HepG2 (cell line): ENCODE measurements at regions of chr13 and their contacts with region 1.

Region 1: GRCh38 chr13:106561551-106562170 is 6.3 kb downstream of the ARGLU1 start:
- DNase-seq: no peak
- ATAC-seq: peak; percentile 45; the same call in 2 of the 3 replicates
- H3K4me3 ChIP-seq: no peak overlapping the region
- H3K27ac ChIP-seq: no peak overlapping the region
- H3K4me1 ChIP-seq: peaks cover 39% of the 10 kb centered on the region
- H3K27me3 ChIP-seq: no peaks in the 10 kb centered on the region; a peak in 1 of 5 replicates
- CTCF ChIP-seq: no peak
- EP300 ChIP-seq: no peak
- POLR2A ChIP-seq: no peak
- RAD21 ChIP-seq: no peak

Region 2: DNA sequence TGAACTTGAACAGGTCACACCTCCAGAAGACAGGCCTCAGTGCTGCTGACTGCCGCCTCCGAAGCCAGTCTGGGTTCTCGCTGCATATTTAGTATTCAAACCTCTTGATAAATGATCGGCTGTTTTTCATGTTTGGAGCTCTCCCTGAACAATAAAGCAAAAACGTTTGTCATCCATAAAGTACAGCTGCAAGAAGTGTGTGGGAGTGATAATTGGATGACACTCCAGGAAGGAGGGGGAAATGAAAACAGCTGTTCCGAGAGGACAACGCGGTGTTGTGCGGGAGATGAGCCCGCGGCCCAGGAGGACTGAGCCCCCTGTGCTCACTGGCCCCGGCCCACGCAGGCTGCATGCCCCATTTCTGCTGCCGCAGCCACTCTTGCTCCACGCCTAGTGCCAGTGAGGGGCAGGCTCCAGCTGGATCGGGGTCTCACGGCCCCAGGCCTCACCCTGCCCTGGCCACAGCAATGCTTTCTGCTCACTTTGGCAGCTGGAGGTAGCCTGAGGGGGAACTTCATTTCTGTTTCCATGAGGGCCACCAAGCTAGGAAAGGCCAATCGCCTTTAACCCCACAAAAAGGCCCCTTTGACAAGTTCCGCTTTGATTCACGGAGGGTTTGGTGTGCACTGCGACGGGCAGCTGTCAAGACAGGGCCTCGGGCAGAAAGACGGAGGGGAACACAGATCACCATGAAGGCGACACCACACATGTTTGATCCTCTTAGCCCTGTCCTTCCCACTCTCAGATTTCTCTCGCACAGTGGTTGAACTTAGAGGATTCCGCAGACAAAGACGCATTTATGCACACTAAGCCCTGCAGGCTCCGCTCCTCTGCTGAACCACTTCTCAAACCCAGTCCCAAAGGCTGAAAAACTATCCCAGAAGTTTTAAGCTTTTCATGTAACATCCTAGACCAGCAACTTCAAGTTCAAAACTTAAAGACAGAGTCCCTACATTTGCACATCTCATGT is 563.8 kb before region 1 on chr13:
- CTCF ChIA-PET with region 1: no interaction called
- POLR2A ChIA-PET with region 1: no interaction called
- in situ Hi-C with region 1: no loop called
- intact Hi-C with region 1: no loop called
- DNase-seq: no peak
- ATAC-seq: no peak
- H3K4me3 ChIP-seq: no peak overlapping the region
- H3K27ac ChIP-seq: no peak overlapping the region
- H3K4me1 ChIP-seq: no peaks in the 10 kb centered on the region
- H3K27me3 ChIP-seq: no peaks in the 10 kb centered on the region
- CTCF ChIP-seq: no peak
- EP300 ChIP-seq: no peak
- POLR2A ChIP-seq: no peak
- RAD21 ChIP-seq: no peak

Region 3: GRCh38 chr13:106220211-106220610 is 341.4 kb before region 1 on chr13:
- CTCF ChIA-PET with region 1: no interaction called
- POLR2A ChIA-PET with region 1: no interaction called
- in situ Hi-C with region 1: no loop called
- intact Hi-C with region 1: no loop called
- DNase-seq: no peak
- ATAC-seq: no peak
- H3K4me3 ChIP-seq: no peak overlapping the region
- H3K27ac ChIP-seq: no peak overlapping the region
- H3K4me1 ChIP-seq: no peaks in the 10 kb centered on the region
- H3K27me3 ChIP-seq: no peaks in the 10 kb centered on the region
- CTCF ChIP-seq: no peak
- EP300 ChIP-seq: no peak
- POLR2A ChIP-seq: no peak
- RAD21 ChIP-seq: no peak

Region 4: DNA sequence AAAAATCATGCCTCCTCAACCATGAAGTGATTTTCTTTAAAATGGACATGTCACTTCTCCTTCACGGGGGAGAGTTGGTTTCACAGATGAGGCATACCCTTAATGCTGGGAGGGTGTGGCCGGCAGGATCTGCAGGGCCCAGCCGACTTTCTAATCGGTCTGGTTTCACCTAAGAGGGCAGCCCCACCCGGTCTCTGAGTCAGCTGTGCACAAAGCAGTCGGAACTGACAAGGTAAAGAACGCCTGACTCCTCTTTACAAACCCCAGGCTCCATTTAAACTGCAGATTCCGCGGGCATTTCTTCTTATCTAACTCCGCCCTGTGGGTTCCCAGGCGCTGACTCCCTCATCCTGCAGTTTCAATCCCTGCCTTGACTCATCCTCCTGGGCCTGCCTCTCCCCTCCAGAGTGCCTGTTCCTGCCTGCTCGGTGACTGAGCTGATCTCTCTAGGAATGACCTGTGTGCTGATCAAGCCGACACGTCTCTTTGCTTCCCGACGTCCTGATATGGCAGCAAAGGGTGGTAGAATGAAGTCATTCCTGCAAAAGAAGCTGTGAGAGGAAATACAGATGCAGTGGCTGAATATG is 89.6 kb before region 1 on chr13:
- CTCF ChIA-PET with region 1: no interaction called
- POLR2A ChIA-PET with region 1: no interaction called
- in situ Hi-C with region 1: no loop called
- intact Hi-C with region 1: no loop called
- DNase-seq: peak; percentile 1
- ATAC-seq: peak; percentile 59
- H3K4me3 ChIP-seq: no peak overlapping the region
- H3K27ac ChIP-seq: no peak overlapping the region
- H3K4me1 ChIP-seq: no peaks in the 10 kb centered on the region
- H3K27me3 ChIP-seq: peaks cover 4 to 35% of the 10 kb centered on the region in 2 experiments; a peak in 3 of 5 replicates
- CTCF ChIP-seq: no peak
- EP300 ChIP-seq: no peak
- POLR2A ChIP-seq: no peak
- RAD21 ChIP-seq: no peak

Region 5: GRCh38 chr13:106533101-106533942 is 28.3 kb before region 1 on chr13:
- CTCF ChIA-PET with region 1: no interaction called
- POLR2A ChIA-PET with region 1: no interaction called
- in situ Hi-C with region 1: no loop called
- intact Hi-C with region 1: no loop called
- DNase-seq: peak; percentile 21
- ATAC-seq: peak; percentile 68
- H3K4me3 ChIP-seq: no peak overlapping the region
- H3K27ac ChIP-seq: no peak overlapping the region
- H3K4me1 ChIP-seq: peaks cover 15% of the 10 kb centered on the region
- H3K27me3 ChIP-seq: peaks cover 2 to 16% of the 10 kb centered on the region in 2 experiments; a peak in 2 of 5 replicates
- CTCF ChIP-seq: peak; percentile 70
- EP300 ChIP-seq: no peak
- POLR2A ChIP-seq: no peak
- RAD21 ChIP-seq: peak; percentile 81

Region 6: GRCh38 chr13:106619688-106620555 is 58.3 kb after region 1 on chr13:
- CTCF ChIA-PET with region 1: no interaction called
- POLR2A ChIA-PET with region 1: no interaction called
- in situ Hi-C with region 1: no loop called
- intact Hi-C with region 1: loop called (anchors 2 kb)
- DNase-seq: peak; percentile 40
- ATAC-seq: peak; percentile 99
- H3K4me3 ChIP-seq: no peak overlapping the region
- H3K27ac ChIP-seq: no peak overlapping the region
- H3K4me1 ChIP-seq: no peaks in the 10 kb centered on the region
- H3K27me3 ChIP-seq: peaks cover 2 to 29% of the 10 kb centered on the region in 2 experiments; a peak in 3 of 5 replicates
- CTCF ChIP-seq: peak; percentile 84
- EP300 ChIP-seq: no peak
- POLR2A ChIP-seq: no peak
- RAD21 ChIP-seq: no peak